Activated B cell treated with CpG ODN at 0.5 μM for 24 hours (primary cell): ENCODE measurements at regions of chr2 and their contacts with region 1.

Region 1: DNA sequence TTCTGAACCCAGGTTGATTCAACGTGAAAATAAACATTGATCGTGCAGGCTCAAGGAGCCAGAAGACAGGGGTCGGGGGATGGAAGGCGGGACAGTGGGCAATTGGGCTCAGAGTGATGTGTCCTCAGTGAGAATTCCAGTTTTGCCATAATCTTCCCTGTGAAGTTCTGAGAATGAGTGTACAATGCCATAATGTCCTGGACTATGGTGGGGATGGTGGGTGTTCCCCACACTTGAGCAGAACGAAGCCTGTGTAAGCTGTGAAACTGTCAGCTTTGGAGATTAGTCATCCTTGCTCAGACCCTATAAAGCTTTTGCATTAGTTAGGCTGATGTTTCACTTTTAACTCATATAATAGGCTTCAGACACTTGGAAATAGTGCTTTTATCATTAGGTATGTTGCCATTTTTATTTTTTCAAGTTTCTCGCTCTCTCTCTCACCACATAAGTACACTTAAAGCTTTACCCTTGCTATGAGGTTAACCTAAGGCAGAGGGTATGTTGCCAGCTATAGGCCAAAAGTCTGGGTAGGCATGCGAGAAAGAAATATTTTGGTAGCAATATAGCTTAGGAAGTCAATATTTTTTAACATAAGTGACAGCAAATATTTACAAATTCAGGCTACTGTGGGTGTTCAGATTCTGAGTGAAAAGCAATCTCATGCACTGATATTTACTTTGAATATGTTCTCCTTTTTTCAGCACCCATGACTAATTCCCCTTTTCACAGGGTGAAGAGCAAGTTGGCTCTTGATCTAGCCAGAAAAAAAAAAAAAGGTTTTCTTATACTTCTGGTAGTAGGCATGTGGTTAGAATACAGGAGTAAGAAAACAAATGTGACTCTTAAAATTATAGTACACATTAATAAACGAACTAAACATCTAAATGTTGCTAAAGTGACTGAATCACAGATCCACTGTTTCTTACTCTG is 47.2 kb downstream of the CDC42EP3 start:
- DNase-seq: no peak
- ATAC-seq: peak; percentile 82
- H3K4me3 Mint-ChIP-seq: peak overlapping the region; percentile 64
- H3K27ac Mint-ChIP-seq: peak overlapping the region; percentile 89
- H3K4me1 Mint-ChIP-seq: peaks cover 70% of the 10 kb centered on the region
- H3K27me3 Mint-ChIP-seq: no peaks in the 10 kb centered on the region
- CTCF ChIP-seq: no peak

Region 2: GRCh38 chr2:36397728-36398413 is 1226.4 kb before region 1 on chr2:
- CTCF ChIA-PET with region 1: no interaction called
- POLR2A ChIA-PET with region 1: no interaction called
- intact Hi-C with region 1: no loop called
- DNase-seq: no peak
- ATAC-seq: no peak
- H3K4me3 Mint-ChIP-seq: no peak overlapping the region
- H3K27ac Mint-ChIP-seq: no peak overlapping the region
- H3K4me1 Mint-ChIP-seq: no peaks in the 10 kb centered on the region
- H3K27me3 Mint-ChIP-seq: no peaks in the 10 kb centered on the region
- CTCF ChIP-seq: no peak

Region 3: GRCh38 chr2:37372000-37372399 is 252.2 kb before region 1 on chr2:
- CTCF ChIA-PET with region 1: no interaction called
- POLR2A ChIA-PET with region 1: no interaction called
- intact Hi-C with region 1: no loop called
- DNase-seq: no peak
- ATAC-seq: no peak
- H3K4me3 Mint-ChIP-seq: no peak overlapping the region
- H3K27ac Mint-ChIP-seq: no peak overlapping the region
- H3K4me1 Mint-ChIP-seq: peaks cover 23% of the 10 kb centered on the region
- H3K27me3 Mint-ChIP-seq: no peaks in the 10 kb centered on the region
- CTCF ChIP-seq: no peak

Region 4: GRCh38 chr2:37585982-37586621 is 38.1 kb before region 1 on chr2:
- CTCF ChIA-PET with region 1: no interaction called
- POLR2A ChIA-PET with region 1: interaction called, 3 read pairs
- intact Hi-C with region 1: loop called (anchors 5 kb)
- DNase-seq: no peak
- ATAC-seq: peak; percentile 34
- H3K4me3 Mint-ChIP-seq: peak overlapping the region; percentile 25
- H3K27ac Mint-ChIP-seq: peak overlapping the region; percentile 22
- H3K4me1 Mint-ChIP-seq: peaks cover 56% of the 10 kb centered on the region
- H3K27me3 Mint-ChIP-seq: no peaks in the 10 kb centered on the region
- CTCF ChIP-seq: no peak

Region 5: DNA sequence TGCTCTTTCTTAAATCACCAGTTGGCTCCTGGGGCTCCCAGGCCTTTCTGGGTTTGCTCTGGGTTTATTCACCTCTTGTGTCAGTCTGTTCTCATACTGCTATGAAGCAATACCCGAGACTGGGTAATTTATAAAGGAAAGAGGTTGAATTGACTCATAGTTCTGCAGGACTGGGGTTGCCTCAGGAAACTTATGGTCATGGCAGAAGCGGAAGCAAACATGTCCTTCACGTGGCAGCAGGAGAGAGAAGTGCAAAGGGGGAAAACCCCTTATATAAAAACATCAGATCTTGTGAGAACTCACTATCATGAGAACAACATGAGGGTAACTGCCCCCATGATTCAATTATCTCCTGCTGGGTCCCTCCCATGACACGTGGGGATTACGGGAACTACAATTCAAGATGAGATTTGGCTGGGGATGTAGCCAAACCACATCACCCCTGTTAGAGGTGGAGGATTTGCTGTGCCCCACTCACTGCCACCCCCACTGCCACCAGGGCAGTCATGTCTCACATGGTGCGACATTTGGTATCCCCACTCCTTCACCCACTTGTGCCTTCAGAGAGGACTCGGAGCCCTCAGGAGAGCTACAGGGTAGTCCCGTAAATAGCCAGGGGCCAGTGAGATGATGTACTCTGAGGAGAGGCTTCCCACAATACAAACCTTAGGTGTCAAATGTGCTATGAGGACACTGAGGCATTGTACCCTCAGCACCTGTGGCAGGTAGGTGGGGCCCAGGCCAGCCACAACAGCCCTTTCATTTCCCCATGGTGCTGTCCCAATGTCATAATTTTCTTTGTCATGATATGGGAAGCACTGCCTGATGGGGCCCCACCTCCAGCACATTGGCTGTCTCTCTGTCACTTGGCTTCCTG is 11.5 kb after region 1 on chr2:
- CTCF ChIA-PET with region 1: interaction called, 3 read pairs
- POLR2A ChIA-PET with region 1: interaction called, 15 read pairs
- intact Hi-C with region 1: loop called (anchors 1 kb)
- DNase-seq: peak; percentile 44
- ATAC-seq: peak; percentile 84
- H3K4me3 Mint-ChIP-seq: peak overlapping the region; percentile 52
- H3K27ac Mint-ChIP-seq: peak overlapping the region; percentile 95
- H3K4me1 Mint-ChIP-seq: peaks cover 50% of the 10 kb centered on the region
- H3K27me3 Mint-ChIP-seq: no peaks in the 10 kb centered on the region
- CTCF ChIP-seq: no peak

Region 6: GRCh38 chr2:37648331-37649011 is 24.2 kb after region 1 on chr2:
- CTCF ChIA-PET with region 1: interaction called, 10 read pairs
- POLR2A ChIA-PET with region 1: interaction called, 36 read pairs
- intact Hi-C with region 1: no loop called
- DNase-seq: no peak
- ATAC-seq: peak; percentile 22
- H3K4me3 Mint-ChIP-seq: peak overlapping the region; percentile 29
- H3K27ac Mint-ChIP-seq: peak overlapping the region; percentile 79
- H3K4me1 Mint-ChIP-seq: peaks cover 91% of the 10 kb centered on the region
- H3K27me3 Mint-ChIP-seq: no peaks in the 10 kb centered on the region
- CTCF ChIP-seq: no peak

Region 7: GRCh38 chr2:37672104-37672869 is 48.1 kb after region 1 on chr2:
- CTCF ChIA-PET with region 1: no interaction called
- POLR2A ChIA-PET with region 1: interaction called, 32 read pairs
- intact Hi-C with region 1: loop called (anchors 2 kb)
- DNase-seq: peak; percentile 68
- ATAC-seq: peak; percentile 54
- H3K4me3 Mint-ChIP-seq: peak overlapping the region; percentile 90
- H3K27ac Mint-ChIP-seq: peak overlapping the region; percentile 84
- H3K4me1 Mint-ChIP-seq: peaks cover 50% of the 10 kb centered on the region
- H3K27me3 Mint-ChIP-seq: no peaks in the 10 kb centered on the region
- CTCF ChIP-seq: no peak